Esophagus muscularis mucosa (tissue), 4 donors: ENCODE measurements at regions of chr2 and their contacts with region 1.

Region 1: DNA sequence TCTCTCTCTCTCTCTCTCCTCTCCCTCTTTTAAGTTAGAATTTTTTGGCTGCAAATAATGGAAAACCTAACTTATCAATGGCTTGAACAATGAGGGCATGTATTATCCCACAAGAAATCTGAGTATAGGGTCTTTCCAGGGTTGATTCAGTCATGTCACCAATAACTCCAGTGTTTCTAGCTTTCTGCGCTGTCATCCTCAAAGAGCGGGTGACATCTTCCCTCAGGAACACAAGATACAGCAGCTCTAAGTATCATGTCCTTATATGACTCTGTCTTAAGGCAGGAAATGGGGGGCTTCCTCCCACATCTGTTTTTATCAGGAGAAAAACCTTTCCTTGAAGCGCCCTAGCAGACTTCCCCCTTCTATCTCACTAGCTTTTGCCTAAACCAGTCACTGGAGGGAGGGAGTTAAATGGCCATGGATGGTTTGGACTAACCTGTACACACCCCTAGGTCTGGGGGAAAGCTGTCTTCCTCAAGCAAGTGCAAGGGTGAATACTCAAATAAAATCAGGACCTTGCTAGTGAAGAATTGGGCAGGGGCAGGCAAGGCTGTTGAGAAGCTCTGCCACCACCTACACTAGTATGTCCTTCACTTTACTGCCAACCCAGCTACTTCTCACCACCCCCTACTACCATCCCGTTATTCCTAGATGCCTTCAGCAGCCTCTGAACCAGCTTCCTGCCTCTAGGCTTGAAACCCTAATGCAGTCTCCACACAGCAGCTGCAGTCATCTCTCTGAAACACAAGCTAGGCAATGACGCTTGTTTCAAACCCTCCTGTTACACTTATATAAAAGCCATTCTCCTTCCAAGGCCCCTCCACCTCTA is 7.5 kb upstream of the TUBA4A start:
- DNase-seq: no peak
- H3K4me3 ChIP-seq: no peak overlapping the region
- H3K27ac ChIP-seq: no peak overlapping the region
- H3K4me1 ChIP-seq: no peaks in the 10 kb centered on the region
- H3K27me3 ChIP-seq: peaks cover 0 to 30% (median 0%) of the 10 kb centered on the region in 4 donors
- CTCF ChIP-seq: no peak
- EP300 ChIP-seq: no peak
- POLR2A ChIP-seq: no peak

Region 2: GRCh38 chr2:218448934-218449333 is 812.3 kb before region 1 on chr2:
- intact Hi-C with region 1: no loop called
- DNase-seq: no peak
- H3K4me3 ChIP-seq: no peak overlapping the region
- H3K27ac ChIP-seq: no peak overlapping the region
- H3K4me1 ChIP-seq: peaks cover 0 to 3% (median 0%) of the 10 kb centered on the region in 4 donors
- H3K27me3 ChIP-seq: no peaks in the 10 kb centered on the region
- CTCF ChIP-seq: no peak
- EP300 ChIP-seq: no peak
- POLR2A ChIP-seq: no peak

Region 3: GRCh38 chr2:219300022-219300421 is 38.8 kb after region 1 on chr2:
- intact Hi-C with region 1: loop called (anchors 5 kb)
- DNase-seq: no peak
- H3K4me3 ChIP-seq: no peak overlapping the region
- H3K27ac ChIP-seq: no peak overlapping the region
- H3K4me1 ChIP-seq: peaks cover 3 to 12% (median 11%) of the 10 kb centered on the region in 4 donors
- H3K27me3 ChIP-seq: peaks cover 0 to 35% (median 0%) of the 10 kb centered on the region in 4 donors
- CTCF ChIP-seq: no peak
- EP300 ChIP-seq: no peak
- POLR2A ChIP-seq: no peak

Region 4: DNA sequence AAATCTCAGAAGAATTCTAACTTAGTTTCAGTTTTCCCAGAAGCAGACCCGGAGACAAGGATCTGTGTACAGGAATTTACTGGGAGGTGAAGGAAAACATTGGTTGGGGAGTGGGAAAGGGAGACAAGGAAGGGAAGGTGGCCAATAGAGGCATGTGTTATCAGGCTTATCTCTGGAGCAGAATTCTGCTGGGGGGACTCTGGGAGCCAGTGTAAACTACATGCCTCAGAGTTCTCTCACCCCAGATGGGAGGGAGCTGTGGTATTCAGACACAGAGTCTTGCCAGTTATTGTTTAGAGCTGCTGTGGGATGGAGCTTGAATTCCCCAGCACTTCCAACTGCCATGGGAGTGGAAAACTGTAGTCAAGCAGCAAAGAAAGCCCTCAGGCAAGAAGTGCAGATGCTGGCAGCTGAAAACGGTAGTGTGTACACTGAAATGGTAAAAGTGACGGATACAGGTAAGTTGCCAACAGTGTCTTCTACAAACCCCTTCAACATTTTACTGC is 107.5 kb after region 1 on chr2:
- intact Hi-C with region 1: no loop called
- DNase-seq: no peak
- H3K4me3 ChIP-seq: peak overlapping the region in 3 of 4 donors; percentile 4 to 21 (median 16)
- H3K27ac ChIP-seq: peak overlapping the region; percentile 43 to 54 (median 52)
- H3K4me1 ChIP-seq: peaks cover 9 to 12% (median 11%) of the 10 kb centered on the region in 4 donors
- H3K27me3 ChIP-seq: no peaks in the 10 kb centered on the region
- CTCF ChIP-seq: no peak
- EP300 ChIP-seq: no peak
- POLR2A ChIP-seq: no peak

Region 5: DNA sequence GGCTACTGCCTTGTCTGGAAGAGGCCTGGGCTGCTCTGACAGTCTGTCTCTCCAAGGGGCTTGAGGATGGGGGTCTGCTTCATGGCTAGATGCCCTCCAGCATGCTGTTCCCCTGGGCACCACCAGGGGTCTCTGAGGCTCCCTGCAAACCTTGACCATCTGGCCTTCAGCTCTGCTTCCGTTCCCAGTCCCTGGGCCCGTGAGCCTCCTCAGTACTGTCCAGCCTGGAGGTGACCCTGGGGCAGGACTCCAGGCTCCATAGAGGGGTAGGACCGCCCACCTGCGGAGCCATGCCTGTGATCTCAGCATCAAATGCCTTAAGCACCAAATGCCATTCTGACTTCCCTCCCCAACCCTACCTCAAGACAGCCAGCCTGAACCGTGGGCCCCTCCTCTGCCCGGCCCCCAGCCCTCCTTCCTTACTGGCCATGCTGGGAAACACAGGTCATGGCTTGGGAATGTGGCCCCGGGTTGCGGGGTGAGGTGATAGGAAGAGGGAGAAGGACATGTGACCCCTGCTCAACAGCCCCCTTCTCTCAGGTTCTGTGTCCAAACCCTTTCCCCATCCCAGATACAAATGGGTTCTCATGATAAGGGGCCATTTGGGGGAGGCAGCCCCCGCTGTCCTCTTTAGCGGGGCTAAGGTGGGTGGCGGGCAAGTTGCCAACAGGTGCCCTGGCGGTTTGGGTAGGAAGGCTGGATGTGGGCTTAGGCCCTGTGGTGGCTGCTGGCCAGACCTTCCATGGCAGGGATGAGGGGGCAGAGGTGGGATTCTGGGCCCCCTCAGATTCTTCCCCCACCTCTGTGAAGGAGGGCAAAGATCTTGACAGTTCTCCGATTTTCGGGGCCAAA is 198.4 kb after region 1 on chr2:
- intact Hi-C with region 1: no loop called
- DNase-seq: no peak
- H3K4me3 ChIP-seq: peak overlapping the region; percentile 31 to 49 (median 40)
- H3K27ac ChIP-seq: peak overlapping the region; percentile 94 to 99 (median 96)
- H3K4me1 ChIP-seq: peaks cover 28 to 100% (median 92%) of the 10 kb centered on the region in 4 donors
- H3K27me3 ChIP-seq: peaks cover 0 to 6% (median 0%) of the 10 kb centered on the region in 4 donors
- CTCF ChIP-seq: peak; percentile 91 to 96 (median 92)
- EP300 ChIP-seq: no peak
- POLR2A ChIP-seq: no peak

Region 6: GRCh38 chr2:219812672-219813071 is 551.4 kb after region 1 on chr2:
- intact Hi-C with region 1: no loop called
- DNase-seq: peak; percentile 78
- H3K4me3 ChIP-seq: no peak overlapping the region
- H3K27ac ChIP-seq: no peak overlapping the region
- H3K4me1 ChIP-seq: no peaks in the 10 kb centered on the region
- H3K27me3 ChIP-seq: no peaks in the 10 kb centered on the region
- CTCF ChIP-seq: no peak
- EP300 ChIP-seq: no peak
- POLR2A ChIP-seq: no peak